Left ventricle myocardium inferior (tissue), 1 donor: ENCODE measurements at regions of chr20 and their contacts with region 1.

Region 1: GRCh38 chr20:25160467-25160866 is 35.0 kb upstream of the ENTPD6 start:
- DNase-seq: no peak
- H3K4me3 ChIP-seq: no peak overlapping the region
- H3K27ac ChIP-seq: no peak overlapping the region
- H3K4me1 ChIP-seq: no peaks in the 10 kb centered on the region
- H3K27me3 ChIP-seq: peaks cover 22% of the 10 kb centered on the region
- CTCF ChIP-seq: no peak

Region 2: GRCh38 chr20:24863356-24863755 is 297.1 kb before region 1 on chr20:
- intact Hi-C with region 1: no loop called
- DNase-seq: no peak
- H3K4me3 ChIP-seq: no peak overlapping the region
- H3K27ac ChIP-seq: no peak overlapping the region
- H3K4me1 ChIP-seq: no peaks in the 10 kb centered on the region
- H3K27me3 ChIP-seq: peaks cover 16% of the 10 kb centered on the region
- CTCF ChIP-seq: no peak

Region 3: GRCh38 chr20:24891546-24892393 is 268.7 kb before region 1 on chr20:
- intact Hi-C with region 1: no loop called
- DNase-seq: no peak
- H3K4me3 ChIP-seq: no peak overlapping the region
- H3K27ac ChIP-seq: no peak overlapping the region
- H3K4me1 ChIP-seq: no peaks in the 10 kb centered on the region
- H3K27me3 ChIP-seq: peaks cover 13% of the 10 kb centered on the region
- CTCF ChIP-seq: no peak

Region 4: GRCh38 chr20:25076731-25077609 is 83.5 kb before region 1 on chr20:
- intact Hi-C with region 1: loop called (anchors 10 kb)
- DNase-seq: no peak
- H3K4me3 ChIP-seq: peak overlapping the region; percentile 56
- H3K27ac ChIP-seq: no peak overlapping the region
- H3K4me1 ChIP-seq: peaks cover 28% of the 10 kb centered on the region
- H3K27me3 ChIP-seq: peaks cover 89% of the 10 kb centered on the region
- CTCF ChIP-seq: peak; percentile 38

Region 5: DNA sequence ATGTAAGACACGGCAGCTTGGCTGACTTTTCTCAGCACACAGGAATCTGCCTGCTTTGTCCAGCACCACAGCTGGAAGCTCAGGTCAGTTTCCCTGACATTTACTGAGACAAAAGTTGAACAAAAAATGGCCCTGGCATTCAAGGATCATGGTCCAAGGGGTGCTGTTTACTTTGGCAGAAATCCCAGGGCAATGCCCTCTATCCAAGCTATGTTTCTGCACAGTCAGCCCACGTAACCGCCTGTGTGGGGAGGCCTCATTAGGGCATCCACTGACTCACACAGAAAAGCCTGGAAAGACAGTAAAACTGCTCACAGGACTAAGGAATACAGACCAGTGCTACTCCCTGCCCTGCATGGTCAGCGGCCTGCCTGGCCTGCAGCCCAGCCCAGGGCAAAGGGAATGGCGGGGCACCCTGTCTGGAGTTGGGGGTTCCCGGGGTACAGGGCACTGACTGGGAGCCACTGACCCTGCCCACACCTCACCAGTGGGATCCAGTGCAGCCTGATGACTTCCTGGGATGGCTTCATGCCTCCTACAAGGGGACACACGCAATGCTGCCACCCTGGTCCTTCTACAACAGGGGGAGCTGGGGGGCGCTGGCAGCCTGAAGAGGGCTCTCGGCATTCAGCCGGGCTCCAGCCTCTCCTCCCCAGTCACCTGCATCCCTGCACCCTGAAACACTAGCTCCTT is 347.8 kb after region 1 on chr20:
- intact Hi-C with region 1: no loop called
- DNase-seq: no peak
- H3K4me3 ChIP-seq: no peak overlapping the region
- H3K27ac ChIP-seq: no peak overlapping the region
- H3K4me1 ChIP-seq: no peaks in the 10 kb centered on the region
- H3K27me3 ChIP-seq: no peaks in the 10 kb centered on the region
- CTCF ChIP-seq: no peak